GM12878 (cell line): ENCODE measurements at regions of chr1 and their contacts with region 1.

Region 1: GRCh38 chr1:201361652-201362504 is 15.6 kb downstream of the TNNT2 start:
- DNase-seq: no peak
- ATAC-seq: peak; percentile 92
- H3K4me3 ChIP-seq: no peak overlapping the region
- H3K27ac ChIP-seq: no peak overlapping the region
- H3K4me1 ChIP-seq: no peaks in the 10 kb centered on the region
- H3K27me3 ChIP-seq: peaks cover 3 to 4% of the 10 kb centered on the region in 2 experiments
- CTCF ChIP-seq: peak; percentile 71 to 85 (median 80)
- EP300 ChIP-seq: no peak
- POLR2A ChIP-seq: no peak
- RAD21 ChIP-seq: peak; percentile 71

Region 2: DNA sequence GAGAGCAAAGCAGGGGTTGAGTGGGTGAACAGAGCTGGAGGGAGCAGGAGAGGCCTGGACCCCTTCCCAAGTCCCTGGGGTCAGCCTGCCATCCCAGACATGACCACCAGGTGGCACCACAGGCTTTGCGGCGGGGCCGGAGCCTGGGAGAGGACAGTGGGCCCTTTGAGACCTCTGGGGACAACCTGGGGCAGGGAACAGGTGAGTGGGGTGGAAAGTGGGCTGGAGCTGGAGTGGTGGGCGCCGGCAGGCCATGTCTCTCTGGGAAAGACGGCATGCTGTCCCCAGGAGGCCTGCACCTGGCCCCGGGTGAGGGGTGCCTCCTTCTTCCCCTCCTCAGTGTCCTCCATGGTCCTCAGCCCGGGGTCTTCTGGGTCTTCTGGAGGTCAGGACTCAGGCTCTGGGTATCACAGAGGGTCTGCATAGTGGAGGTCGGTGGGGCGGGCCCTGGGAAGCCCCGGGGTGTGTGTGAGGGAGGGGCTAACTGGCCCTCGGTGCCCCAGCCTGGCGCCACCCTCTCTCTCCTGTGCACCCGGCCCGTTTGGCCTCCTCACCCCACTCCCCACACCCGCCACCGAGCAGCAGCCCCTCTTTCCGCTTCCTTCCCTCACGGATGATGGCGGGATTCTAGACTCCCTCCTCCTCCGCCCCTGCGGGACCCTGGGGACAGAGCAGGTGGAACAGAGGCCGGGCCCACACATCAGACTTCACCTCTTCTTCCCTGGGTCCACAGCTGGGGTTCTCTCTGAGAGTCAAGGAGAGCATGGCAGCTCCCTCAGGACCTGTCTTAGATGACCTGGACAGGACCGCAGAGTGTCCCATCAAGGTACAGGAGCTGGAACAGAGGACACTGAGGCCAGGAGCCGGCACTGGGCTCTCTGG is 107.0 kb before region 1 on chr1:
- CTCF ChIA-PET with region 1: interaction called, 25 read pairs
- POLR2A ChIA-PET with region 1: no interaction called
- RAD21 ChIA-PET with region 1: interaction called, 4 read pairs
- SMC1A ChIA-PET with region 1: interaction called, 7 read pairs
- in situ Hi-C with region 1: no loop called
- intact Hi-C with region 1: loop called (anchors 1 kb)
- DNase-seq: no peak
- ATAC-seq: peak; percentile 95
- H3K4me3 ChIP-seq: no peak overlapping the region
- H3K27ac ChIP-seq: no peak overlapping the region
- H3K4me1 ChIP-seq: no peaks in the 10 kb centered on the region
- H3K27me3 ChIP-seq: no peaks in the 10 kb centered on the region
- CTCF ChIP-seq: peak; percentile 94 to 99 (median 96)
- EP300 ChIP-seq: no peak
- POLR2A ChIP-seq: no peak
- RAD21 ChIP-seq: peak; percentile 89